ENCODE measurements at regions of chr6 and their contacts with region 1.

Region 1: GRCh38 chr6:161370880-161371279 is 97.0 kb upstream of the AGPAT4 start:
- DNase-seq: peak; percentile 75
- ATAC-seq: peak; percentile 58
- H3K4me3 ChIP-seq: no peak overlapping the region
- H3K27ac ChIP-seq: 0 out of 2 replicates have a peak overlapping the region, but pooled peaks have one; percentile 28
- H3K4me1 ChIP-seq: peaks cover 21% of the 10 kb centered on the region
- H3K27me3 ChIP-seq: no peaks in the 10 kb centered on the region
- CTCF ChIP-seq: peak; percentile 84

Region 2: DNA sequence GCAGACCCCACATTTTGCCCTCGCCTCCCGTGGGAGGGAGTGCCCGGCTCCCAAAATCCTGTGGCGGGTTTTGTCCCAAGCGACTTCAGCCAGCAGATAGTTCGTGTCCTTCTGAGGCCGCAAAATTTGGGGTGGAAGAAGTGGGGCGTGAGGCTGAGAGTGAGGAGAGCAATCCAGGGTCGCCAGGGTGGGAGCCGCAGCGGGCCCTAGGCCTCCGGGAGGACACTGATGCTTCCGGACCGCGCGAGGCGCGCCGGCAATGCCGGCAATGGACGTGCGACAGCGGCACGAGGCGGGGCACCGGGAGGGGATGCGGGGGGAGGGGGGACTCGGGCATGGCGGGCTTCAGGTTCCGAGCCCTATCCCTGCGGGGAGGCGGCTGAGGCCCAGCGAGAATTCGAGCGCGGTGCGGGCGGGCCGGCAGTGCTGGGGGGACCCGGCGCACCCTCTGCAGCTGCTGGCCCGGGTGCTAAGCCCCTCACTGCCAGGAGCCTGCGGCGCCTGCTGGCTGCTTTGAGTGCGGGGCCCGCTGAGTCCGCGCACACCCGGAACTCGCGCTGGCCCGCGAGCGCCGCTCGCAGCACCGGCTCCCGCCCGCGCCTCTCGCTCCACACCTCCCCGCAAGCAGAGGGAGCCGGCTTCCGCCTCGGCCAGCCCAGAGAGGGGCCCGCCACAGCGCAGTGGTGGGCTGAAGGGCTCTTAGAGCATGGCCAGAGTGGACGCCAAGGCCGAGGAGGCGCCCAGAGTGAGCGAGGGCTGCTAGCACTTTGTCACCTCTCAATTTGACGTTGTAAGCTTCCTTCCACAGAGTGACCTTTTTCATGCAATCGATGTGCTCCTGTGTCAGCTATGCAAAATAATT is 850.6 kb before region 1 on chr6:
- CTCF ChIA-PET with region 1: no interaction called
- POLR2A ChIA-PET with region 1: no interaction called
- intact Hi-C with region 1: loop called (anchors 5 kb)
- DNase-seq: peak; percentile 33
- ATAC-seq: peak; percentile 72
- H3K4me3 ChIP-seq: peak overlapping the region; percentile 79
- H3K27ac ChIP-seq: peak overlapping the region; percentile 41; the same call in 1 of the 2 replicates
- H3K4me1 ChIP-seq: peaks cover 10% of the 10 kb centered on the region; the same call in 1 of the 2 replicates
- H3K27me3 ChIP-seq: no peaks in the 10 kb centered on the region
- CTCF ChIP-seq: peak; percentile 21; the same call in 1 of the 2 replicates

Region 3: DNA sequence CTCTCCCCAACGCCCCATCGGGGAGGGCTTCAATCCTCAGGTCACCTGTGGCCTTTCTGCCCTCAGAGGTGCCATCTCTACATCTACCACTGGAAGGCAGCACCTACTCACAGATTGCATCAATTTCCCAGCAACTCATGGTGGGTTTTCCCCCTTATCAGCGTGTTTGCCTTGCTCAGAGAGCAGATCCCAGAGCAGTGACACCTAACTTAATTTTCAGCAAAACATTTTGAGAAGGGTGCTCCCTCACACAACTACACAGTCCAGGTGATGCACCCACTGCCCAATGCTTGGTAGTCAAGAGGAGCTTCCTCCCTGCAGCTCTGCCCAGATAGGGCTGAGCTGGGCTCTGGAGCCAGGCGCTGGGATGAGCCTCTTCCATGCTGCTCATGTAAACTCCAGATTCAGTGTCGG is 620.6 kb before region 1 on chr6:
- CTCF ChIA-PET with region 1: no interaction called
- POLR2A ChIA-PET with region 1: no interaction called
- intact Hi-C with region 1: loop called (anchors 2 kb)
- DNase-seq: peak; percentile 58
- ATAC-seq: peak; percentile 76
- H3K4me3 ChIP-seq: no peak overlapping the region
- H3K27ac ChIP-seq: 0 out of 2 replicates have a peak overlapping the region, but pooled peaks have one; percentile 16
- H3K4me1 ChIP-seq: no peaks in the 10 kb centered on the region; the same call in 1 of the 2 replicates
- H3K27me3 ChIP-seq: no peaks in the 10 kb centered on the region
- CTCF ChIP-seq: peak; percentile 91

Region 4: GRCh38 chr6:161101517-161101916 is 269.4 kb before region 1 on chr6:
- CTCF ChIA-PET with region 1: interaction called, 3 read pairs
- POLR2A ChIA-PET with region 1: no interaction called
- intact Hi-C with region 1: loop called (anchors 2 kb)
- DNase-seq: no peak
- ATAC-seq: no peak
- H3K4me3 ChIP-seq: no peak overlapping the region
- H3K27ac ChIP-seq: no peak overlapping the region
- H3K4me1 ChIP-seq: peaks cover 20% of the 10 kb centered on the region
- H3K27me3 ChIP-seq: no peaks in the 10 kb centered on the region
- CTCF ChIP-seq: peak; percentile 37

Region 5: DNA sequence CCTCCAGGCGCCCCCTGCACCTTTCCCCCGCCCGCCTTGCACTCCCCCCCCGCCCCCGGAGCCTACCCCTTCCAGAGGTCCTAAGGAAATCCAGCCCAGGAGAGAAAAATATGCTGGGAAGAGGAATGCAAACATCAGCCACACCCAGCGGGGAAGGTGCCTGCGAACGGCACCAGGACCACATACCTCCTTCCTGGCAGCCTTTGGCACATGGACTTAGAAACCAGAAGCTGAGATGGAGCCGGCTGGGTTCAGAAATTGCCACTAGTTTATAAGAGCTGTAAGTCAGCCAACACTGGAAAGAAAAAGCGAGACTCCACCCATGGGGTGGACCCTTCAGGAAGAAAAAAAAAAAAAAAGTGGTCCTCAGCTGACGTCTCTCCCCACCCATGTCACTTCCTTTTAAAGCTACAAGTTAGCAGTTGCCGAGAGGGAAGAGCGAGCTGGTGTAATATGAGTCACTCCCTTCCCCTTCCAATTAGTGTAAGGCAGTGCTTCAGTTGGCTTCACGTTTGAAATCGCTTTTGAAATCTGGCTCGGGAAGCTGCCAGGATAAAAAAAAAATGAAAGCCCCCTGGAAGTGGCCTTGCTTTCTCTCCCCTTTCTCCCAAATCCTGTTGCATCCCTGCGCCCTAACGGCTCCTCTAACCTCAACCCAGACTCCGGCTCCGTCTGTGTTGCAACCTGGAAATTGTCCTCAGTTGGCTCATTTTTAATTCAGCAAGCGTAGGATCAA is 97.0 kb before region 1 on chr6 and contains the start of gene AGPAT4:
- CTCF ChIA-PET with region 1: interaction called, 12 read pairs
- POLR2A ChIA-PET with region 1: interaction called, 4 read pairs
- intact Hi-C with region 1: loop called (anchors 5 kb)
- DNase-seq: peak; percentile 89
- ATAC-seq: peak; percentile 88
- H3K4me3 ChIP-seq: peak within 1 kb of the TSS; percentile 85
- H3K27ac ChIP-seq: peak within 1 kb of the TSS; percentile 66
- H3K4me1 ChIP-seq: peaks cover 29% of the 10 kb centered on the region
- H3K27me3 ChIP-seq: no peaks in the 10 kb centered on the region
- CTCF ChIP-seq: no peak
- total RNA-seq, gene AGPAT4: 3.8 and 3.9 TPM in 2 replicates

Measured in PC-3 (cell line).